ENCODE measurements at regions of chr3 and their contacts with region 1.

Region 1: GRCh38 chr3:153026026-153026425 is 136.0 kb upstream of the RAP2B start:
- ATAC-seq: peak in 3 of 8 experiments; percentile 18 to 55 (median 27)
- H3K4me3 ChIP-seq: no peak overlapping the region
- H3K27ac ChIP-seq: no peak overlapping the region
- H3K4me1 ChIP-seq: no peaks in the 10 kb centered on the region

Region 2: DNA sequence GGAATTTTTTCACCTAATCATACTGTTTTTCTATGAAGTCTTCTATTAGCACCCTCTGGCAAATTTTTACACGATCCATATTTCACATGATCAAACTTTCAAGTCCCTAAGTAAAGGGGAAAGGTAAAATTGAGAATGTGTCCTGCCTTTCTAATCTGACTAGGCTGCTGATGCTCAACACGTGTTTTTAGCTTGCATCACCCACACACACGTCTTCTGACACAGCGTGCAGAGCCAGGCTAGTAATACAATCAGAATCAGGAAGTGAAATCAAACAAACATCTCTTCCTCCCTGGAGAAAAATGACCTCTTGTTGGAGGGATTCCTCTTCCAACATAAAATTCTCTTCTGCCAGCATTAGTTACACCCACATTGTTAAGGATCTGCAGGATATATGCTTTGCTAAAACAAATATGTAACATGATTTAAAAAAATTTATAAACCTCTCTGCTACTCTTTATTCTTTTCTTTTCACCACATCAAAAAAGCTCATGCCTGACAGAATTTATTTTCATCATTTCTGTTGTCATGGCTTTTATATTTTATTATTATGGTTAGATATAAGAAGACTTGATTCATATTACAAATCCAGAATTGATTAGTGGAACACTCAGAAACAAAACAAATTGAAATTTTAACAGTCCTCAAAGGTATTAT is 258.4 kb after region 1 on chr3:
- in situ Hi-C with region 1: loop called in 2 of 9 experiments (anchors 25 kb)
- ATAC-seq: peak; percentile 56 to 97 (median 90)
- H3K4me3 ChIP-seq: no peak overlapping the region
- H3K27ac ChIP-seq: peak overlapping the region in 1 of 2 donors; percentile 49
- H3K4me1 ChIP-seq: peaks cover 0 to 5% of the 10 kb centered on the region in 2 donors

Region 3: GRCh38 chr3:153595186-153595815 is 569.3 kb after region 1 on chr3:
- in situ Hi-C with region 1: loop called in 3 of 9 experiments (anchors 25 kb)
- ATAC-seq: peak in 7 of 8 experiments; percentile 38 to 91 (median 68)
- H3K4me3 ChIP-seq: no peak overlapping the region
- H3K27ac ChIP-seq: no peak overlapping the region
- H3K4me1 ChIP-seq: no peaks in the 10 kb centered on the region

Region 4: GRCh38 chr3:153768561-153769469 is 742.8 kb after region 1 on chr3:
- in situ Hi-C with region 1: loop called in 4 of 9 experiments (anchors 25 kb)
- ATAC-seq: peak in 7 of 8 experiments; percentile 21 to 96 (median 76)
- H3K4me3 ChIP-seq: no peak overlapping the region
- H3K27ac ChIP-seq: no peak overlapping the region
- H3K4me1 ChIP-seq: no peaks in the 10 kb centered on the region

Region 5: DNA sequence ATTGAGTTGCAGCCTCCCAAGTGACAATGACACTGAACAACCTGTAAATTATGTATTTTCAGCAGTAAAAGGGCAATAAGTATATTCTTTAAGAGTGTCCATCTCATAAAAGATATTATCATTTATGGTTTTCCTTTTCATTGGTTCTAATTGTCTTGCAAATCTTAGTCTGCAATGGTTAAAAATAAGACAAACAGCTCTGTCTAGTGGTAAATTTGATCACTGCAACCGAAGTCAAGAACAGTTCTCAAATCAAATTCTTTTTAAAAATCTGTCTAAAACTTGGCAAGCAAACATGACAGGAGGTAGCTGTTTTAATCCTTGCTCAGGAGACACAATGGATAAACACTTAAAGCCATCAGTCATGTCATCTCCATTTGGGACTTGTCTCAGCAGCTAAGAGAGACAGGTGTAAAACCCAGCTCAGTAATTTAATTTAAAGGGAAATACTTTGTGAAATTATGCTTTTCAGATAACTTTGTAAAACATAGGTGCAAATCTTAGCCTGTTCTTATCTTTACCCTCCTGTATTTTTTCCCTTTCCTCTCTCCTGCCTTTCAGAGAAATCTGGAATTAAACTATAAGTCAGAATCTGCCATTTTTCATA is 944.8 kb after region 1 on chr3:
- in situ Hi-C with region 1: loop called in 1 of 9 experiments (anchors 25 kb)
- ATAC-seq: no peak
- H3K4me3 ChIP-seq: no peak overlapping the region
- H3K27ac ChIP-seq: no peak overlapping the region
- H3K4me1 ChIP-seq: no peaks in the 10 kb centered on the region

Region 6: DNA sequence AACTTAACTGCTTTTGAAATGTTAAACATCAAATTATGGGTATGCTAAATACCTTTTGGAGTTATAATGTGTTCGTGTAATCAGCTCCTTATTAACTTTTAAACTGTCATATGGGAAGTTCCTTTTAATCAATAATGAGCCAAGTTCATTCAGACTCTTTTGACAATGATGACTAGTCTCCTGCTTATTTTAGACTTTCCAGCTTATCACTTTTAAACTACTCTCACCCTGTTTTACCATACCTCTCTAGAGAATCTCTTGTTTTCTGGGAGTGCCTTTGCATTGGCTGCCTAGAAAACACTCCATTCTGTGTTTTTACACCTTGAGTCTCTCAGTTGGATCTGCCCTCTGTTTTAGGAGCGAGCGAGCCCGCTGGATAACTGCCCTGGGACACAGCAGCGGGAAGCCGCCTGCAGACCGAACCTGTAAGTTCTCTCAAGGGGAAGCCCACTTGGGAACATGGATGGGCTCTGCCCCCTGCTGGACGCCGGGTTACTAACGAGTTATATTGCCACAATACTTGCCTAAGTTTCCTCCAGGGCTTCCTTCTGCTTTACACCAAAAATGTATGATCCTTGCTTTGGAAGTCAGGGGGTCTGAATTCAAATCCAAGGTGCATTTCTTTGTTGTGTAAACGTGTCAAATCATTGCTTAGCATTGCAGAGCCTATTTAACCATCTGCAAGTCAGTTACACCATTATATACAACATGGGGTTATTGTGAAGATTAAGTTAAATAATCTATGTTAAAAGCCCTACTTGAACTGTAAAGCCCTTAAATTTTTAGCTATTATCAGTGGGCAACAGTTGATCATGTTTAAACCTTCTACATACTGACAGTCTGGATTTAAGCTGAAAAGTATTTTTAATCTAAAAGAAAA is 1227.0 kb after region 1 on chr3:
- in situ Hi-C with region 1: loop called in 2 of 9 experiments (anchors 25 kb)
- ATAC-seq: peak; percentile 88 to 97 (median 94)
- H3K4me3 ChIP-seq: no peak overlapping the region
- H3K27ac ChIP-seq: no peak overlapping the region
- H3K4me1 ChIP-seq: peaks cover 11 to 12% of the 10 kb centered on the region in 2 donors